ENCODE measurements at regions of chr4 and their contacts with region 1.

Region 1: DNA sequence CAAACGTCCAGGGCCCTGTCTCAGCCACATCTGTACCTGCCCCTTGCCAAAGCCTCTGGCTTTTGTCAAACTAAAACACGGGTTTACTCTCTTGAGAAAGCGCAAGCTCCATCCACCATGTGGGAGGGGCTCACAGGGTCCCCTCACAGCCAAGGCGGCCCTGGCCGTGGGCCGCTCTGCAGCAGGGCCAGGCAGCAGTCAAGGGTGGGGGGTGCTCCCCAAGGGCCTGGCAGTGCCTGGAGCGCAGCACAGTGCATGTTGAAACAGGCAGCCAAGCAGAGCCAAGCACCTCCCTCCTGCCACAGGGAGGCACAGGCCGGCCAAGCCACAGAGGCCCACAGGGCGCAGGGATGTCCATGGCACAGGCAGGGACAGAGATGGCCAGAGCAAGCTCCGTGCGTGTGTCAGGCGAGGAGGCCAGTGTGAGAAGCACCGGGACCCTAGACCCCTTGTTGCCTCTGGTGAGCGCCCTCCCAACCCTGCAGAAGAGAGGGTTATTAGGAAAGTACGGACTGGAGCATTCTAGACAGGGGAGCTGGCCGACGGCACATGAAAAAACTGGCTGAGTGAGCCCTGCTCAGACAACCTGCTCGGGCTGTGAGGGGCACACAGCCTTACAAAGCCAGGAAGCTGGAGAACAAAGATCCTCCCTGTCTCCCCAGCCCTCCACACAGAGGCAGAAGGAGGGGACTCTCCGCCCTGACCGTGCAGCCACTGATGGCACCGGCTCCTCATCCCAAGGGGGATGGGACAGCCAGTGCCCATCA is 39.0 kb downstream of the FAM53A start:
- DNase-seq: peak; percentile 95
- H3K4me3 ChIP-seq: peak overlapping the region in 2 of 4 donors; percentile 7 to 18
- H3K27ac ChIP-seq: peak overlapping the region in 3 of 4 donors; percentile 82 to 90 (median 88)
- H3K4me1 ChIP-seq: peaks cover 6 to 23% (median 17%) of the 10 kb centered on the region in 4 donors
- H3K27me3 ChIP-seq: no peaks in the 10 kb centered on the region
- CTCF ChIP-seq: no peak
- EP300 ChIP-seq: peak; percentile 44 to 62 (median 52)
- POLR2A ChIP-seq: no peak

Region 2: GRCh38 chr4:866761-867390 is 778.2 kb before region 1 on chr4:
- intact Hi-C with region 1: no loop called
- DNase-seq: no peak
- H3K4me3 ChIP-seq: no peak overlapping the region
- H3K27ac ChIP-seq: no peak overlapping the region
- H3K4me1 ChIP-seq: no peaks in the 10 kb centered on the region
- H3K27me3 ChIP-seq: no peaks in the 10 kb centered on the region
- CTCF ChIP-seq: no peak
- EP300 ChIP-seq: no peak
- POLR2A ChIP-seq: no peak

Region 3: DNA sequence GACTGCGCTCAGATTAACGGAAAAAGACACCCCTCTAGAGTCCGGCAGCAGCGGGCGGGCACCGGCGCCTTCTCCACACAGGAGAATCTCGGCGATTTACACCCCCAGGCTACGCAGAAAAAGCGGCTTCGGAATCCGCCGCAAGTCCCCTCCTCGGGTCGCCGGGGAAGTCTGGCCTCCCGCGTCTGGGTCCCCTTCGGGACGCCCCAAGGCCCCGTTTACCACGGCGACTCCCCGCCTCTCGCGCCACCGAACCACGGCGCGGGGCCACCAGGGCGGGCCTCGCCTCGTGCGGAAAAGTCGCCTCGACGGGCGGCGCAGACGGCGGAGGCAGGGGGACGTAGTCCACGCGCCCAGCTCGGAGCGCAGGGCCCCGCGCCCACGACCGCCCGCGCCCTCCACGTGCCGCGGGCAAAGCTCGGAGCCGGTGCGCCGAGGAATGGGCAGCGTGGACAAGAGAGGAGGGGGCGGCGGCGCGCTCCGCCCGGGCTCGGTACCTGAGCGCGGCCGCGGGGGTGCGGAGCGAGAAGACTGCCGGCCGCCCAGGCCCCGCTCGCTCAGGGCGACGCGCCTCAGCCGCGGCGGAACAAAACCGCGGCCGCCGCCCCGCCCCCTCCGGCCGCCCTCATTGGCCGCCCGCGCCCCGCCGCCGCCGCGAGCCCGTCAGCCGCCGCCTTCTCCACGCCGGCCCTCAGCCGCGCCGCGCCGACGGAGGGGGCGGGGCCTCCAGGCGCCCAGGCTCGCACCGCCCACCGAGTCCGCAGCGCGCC is 38.8 kb after region 1 on chr4 and contains the start of gene FAM53A:
- intact Hi-C with region 1: loop called (anchors 1 kb)
- DNase-seq: peak; percentile 74
- H3K4me3 ChIP-seq: peak within 1 kb of the TSS; percentile 36 to 78 (median 63)
- H3K27ac ChIP-seq: peak within 1 kb of the TSS; percentile 89 to 95 (median 90)
- H3K4me1 ChIP-seq: peaks cover 0 to 20% (median 11%) of the 10 kb centered on the region in 4 donors
- H3K27me3 ChIP-seq: no peaks in the 10 kb centered on the region
- CTCF ChIP-seq: no peak
- EP300 ChIP-seq: no peak
- POLR2A ChIP-seq: no peak
- total RNA-seq, gene FAM53A: 0.82 to 4.1 (median 1.7) TPM

Region 4: GRCh38 chr4:1721004-1721665 is 76.1 kb after region 1 on chr4 and contains the starts of genes TACC3 and TMEM129:
- intact Hi-C with region 1: loop called (anchors 10 kb)
- DNase-seq: peak; percentile 96
- H3K4me3 ChIP-seq: peak within 1 kb of the TSS; percentile 60 to 78 (median 67)
- H3K27ac ChIP-seq: peak within 1 kb of the TSS; percentile 90 to 96 (median 94)
- H3K4me1 ChIP-seq: peaks cover 0 to 46% (median 35%) of the 10 kb centered on the region in 4 donors
- H3K27me3 ChIP-seq: no peaks in the 10 kb centered on the region
- CTCF ChIP-seq: no peak
- EP300 ChIP-seq: peak in 1 of 4 donors; percentile 18
- POLR2A ChIP-seq: peak in 1 of 2 donors; percentile 36
- total RNA-seq, gene TACC3: 4.3 to 13.0 (median 6.9) TPM
- total RNA-seq, gene TMEM129: 40.6 to 51.4 (median 49.2) TPM